ENCODE measurements at regions of chr17 and their contacts with region 1.

Region 1: GRCh38 chr17:69575346-69575761 is 160.9 kb downstream of the MAP2K6 start:
- DNase-seq: peak in 2 of 3 donors; percentile 9 to 19
- H3K4me3 ChIP-seq: no peak overlapping the region
- H3K27ac ChIP-seq: no peak overlapping the region
- H3K4me1 ChIP-seq: peaks cover 0 to 4% (median 1%) of the 10 kb centered on the region in 4 experiments
- H3K27me3 ChIP-seq: no peaks in the 10 kb centered on the region

Region 2: GRCh38 chr17:70629902-70630301 is 1054.5 kb after region 1 on chr17:
- CTCF ChIA-PET with region 1: interaction called, 17 read pairs
- POLR2A ChIA-PET with region 1: no interaction called
- DNase-seq: peak; percentile 45 to 69 (median 67)
- H3K4me3 ChIP-seq: no peak overlapping the region
- H3K27ac ChIP-seq: no peak overlapping the region
- H3K4me1 ChIP-seq: no peaks in the 10 kb centered on the region
- H3K27me3 ChIP-seq: no peaks in the 10 kb centered on the region

Measured in common myeloid progenitor, CD34-positive (primary cell).